ENCODE measurements at regions of chr9 and their contacts with region 1.

Region 1: DNA sequence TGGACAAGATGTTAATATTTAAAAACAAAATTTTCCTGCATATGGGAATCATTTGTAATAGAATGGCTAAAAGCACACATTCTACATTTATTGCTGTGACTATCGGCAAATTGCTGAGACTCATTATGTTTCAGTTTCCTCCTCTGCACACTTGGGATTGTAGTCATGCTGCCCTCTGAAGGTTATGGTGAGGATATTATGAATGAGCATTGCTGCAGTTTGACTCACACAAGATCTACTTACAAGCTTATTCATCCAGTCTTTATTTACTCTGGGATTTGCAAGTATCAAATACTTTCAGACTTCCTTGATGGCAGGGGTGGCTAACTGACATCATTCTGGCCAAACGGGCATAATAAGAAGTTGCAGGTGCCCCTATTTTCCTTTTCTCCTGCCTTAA is 9.5 kb upstream of the NFIL3 start:
- DNase-seq: no peak
- H3K4me3 ChIP-seq: no peak overlapping the region
- H3K27ac ChIP-seq: no peak overlapping the region
- H3K4me1 ChIP-seq: no peaks in the 10 kb centered on the region
- H3K27me3 ChIP-seq: no peaks in the 10 kb centered on the region
- CTCF ChIP-seq: peak in 2 of 3 donors; percentile 37 to 38
- POLR2A ChIP-seq: no peak

Region 2: GRCh38 chr9:89878687-89879086 is 1554.5 kb before region 1 on chr9:
- intact Hi-C with region 1: loop called (anchors 10 kb)
- DNase-seq: peak; percentile 44 to 84
- H3K4me3 ChIP-seq: no peak overlapping the region
- H3K27ac ChIP-seq: peak overlapping the region in 1 of 2 donors; percentile 21
- H3K4me1 ChIP-seq: no peaks in the 10 kb centered on the region
- H3K27me3 ChIP-seq: no peaks in the 10 kb centered on the region
- CTCF ChIP-seq: no peak
- POLR2A ChIP-seq: no peak

Region 3: GRCh38 chr9:90914868-90915483 is 518.2 kb before region 1 on chr9:
- intact Hi-C with region 1: loop called (anchors 10 kb)
- DNase-seq: peak; percentile 62 to 77
- H3K4me3 ChIP-seq: no peak overlapping the region
- H3K27ac ChIP-seq: no peak overlapping the region
- H3K4me1 ChIP-seq: no peaks in the 10 kb centered on the region
- H3K27me3 ChIP-seq: no peaks in the 10 kb centered on the region
- CTCF ChIP-seq: peak; percentile 78 to 95 (median 94)
- POLR2A ChIP-seq: no peak

Measured in breast epithelium (tissue), 4 donors.